ENCODE measurements at regions of chr1 and their contacts with region 1.

Region 1: GRCh38 chr1:46616277-46617107 is at the start of gene MOB3C:
- DNase-seq: no peak
- ATAC-seq: peak; percentile 89
- H3K4me3 ChIP-seq: peak within 1 kb of the TSS; percentile 63 to 73
- H3K27ac ChIP-seq: peak within 1 kb of the TSS; percentile 49; the same call in 1 of the 2 replicates
- H3K4me1 ChIP-seq: peaks cover 13 to 51% of the 10 kb centered on the region in 2 experiments; a peak in 3 of 4 replicates
- H3K27me3 ChIP-seq: no peaks in the 10 kb centered on the region
- CTCF ChIP-seq: no peak
- POLR2A ChIP-seq: no peak
- RAD21 ChIP-seq: no peak
- total RNA-seq, gene MOB3C: 5.5 TPM

Region 2: GRCh38 chr1:46603858-46604549 is 12.5 kb before region 1 on chr1 and contains the start of gene MKNK1:
- CTCF ChIA-PET with region 1: interaction called, 4 read pairs
- POLR2A ChIA-PET with region 1: interaction called, 14 read pairs
- RAD21 ChIA-PET with region 1: interaction called in 1 of 2 experiments, 3 read pairs
- intact Hi-C with region 1: no loop called
- DNase-seq: peak; percentile 91
- ATAC-seq: peak; percentile 95
- H3K4me3 ChIP-seq: peak within 1 kb of the TSS; percentile 75 to 94
- H3K27ac ChIP-seq: peak within 1 kb of the TSS; percentile 65
- H3K4me1 ChIP-seq: peaks cover 0 to 15% of the 10 kb centered on the region in 2 experiments; a peak in 3 of 4 replicates
- H3K27me3 ChIP-seq: no peaks in the 10 kb centered on the region
- CTCF ChIP-seq: no peak
- POLR2A ChIP-seq: peak; percentile 81
- RAD21 ChIP-seq: no peak
- total RNA-seq, gene MKNK1: 30.9 TPM

Region 3: GRCh38 chr1:46927249-46927835 is 310.9 kb after region 1 on chr1:
- CTCF ChIA-PET with region 1: no interaction called
- POLR2A ChIA-PET with region 1: no interaction called
- RAD21 ChIA-PET with region 1: no interaction called
- intact Hi-C with region 1: no loop called
- DNase-seq: no peak
- ATAC-seq: no peak
- H3K4me3 ChIP-seq: no peak overlapping the region
- H3K27ac ChIP-seq: no peak overlapping the region
- H3K4me1 ChIP-seq: no peaks in the 10 kb centered on the region
- H3K27me3 ChIP-seq: 0 out of 2 replicates have a peak, but pooled peaks cover 2% of the 10 kb centered on the region
- CTCF ChIP-seq: no peak
- POLR2A ChIP-seq: no peak
- RAD21 ChIP-seq: no peak

Measured in HCT116 (cell line).